ENCODE measurements at regions of chr1 and their contacts with region 1.

Region 1: GRCh38 chr1:87084244-87084836 is 169.9 kb downstream of the HS2ST1 start:
- DNase-seq: peak; percentile 4
- ATAC-seq: no peak
- H3K4me3 ChIP-seq: no peak overlapping the region
- H3K27ac ChIP-seq: no peak overlapping the region
- H3K4me1 ChIP-seq: no peaks in the 10 kb centered on the region
- H3K27me3 ChIP-seq: no peaks in the 10 kb centered on the region
- CTCF ChIP-seq: peak; percentile 32; the same call in 1 of the 2 replicates
- EP300 ChIP-seq: no peak
- POLR2A ChIP-seq: no peak
- RAD21 ChIP-seq: no peak

Region 2: GRCh38 chr1:86825319-86825718 is 259.0 kb before region 1 on chr1:
- CTCF ChIA-PET with region 1: no interaction called
- POLR2A ChIA-PET with region 1: no interaction called
- in situ Hi-C with region 1: loop called (anchors 10 kb)
- intact Hi-C with region 1: no loop called
- DNase-seq: no peak
- ATAC-seq: no peak
- H3K4me3 ChIP-seq: no peak overlapping the region
- H3K27ac ChIP-seq: no peak overlapping the region
- H3K4me1 ChIP-seq: peaks cover 55% of the 10 kb centered on the region
- H3K27me3 ChIP-seq: no peaks in the 10 kb centered on the region
- CTCF ChIP-seq: no peak
- EP300 ChIP-seq: no peak
- POLR2A ChIP-seq: no peak
- RAD21 ChIP-seq: no peak

Region 3: GRCh38 chr1:87045761-87046304 is 38.5 kb before region 1 on chr1:
- CTCF ChIA-PET with region 1: no interaction called
- POLR2A ChIA-PET with region 1: no interaction called
- in situ Hi-C with region 1: no loop called
- intact Hi-C with region 1: no loop called
- DNase-seq: no peak
- ATAC-seq: no peak
- H3K4me3 ChIP-seq: no peak overlapping the region
- H3K27ac ChIP-seq: no peak overlapping the region
- H3K4me1 ChIP-seq: no peaks in the 10 kb centered on the region
- H3K27me3 ChIP-seq: no peaks in the 10 kb centered on the region
- CTCF ChIP-seq: no peak
- EP300 ChIP-seq: no peak
- POLR2A ChIP-seq: no peak
- RAD21 ChIP-seq: no peak

Region 4: DNA sequence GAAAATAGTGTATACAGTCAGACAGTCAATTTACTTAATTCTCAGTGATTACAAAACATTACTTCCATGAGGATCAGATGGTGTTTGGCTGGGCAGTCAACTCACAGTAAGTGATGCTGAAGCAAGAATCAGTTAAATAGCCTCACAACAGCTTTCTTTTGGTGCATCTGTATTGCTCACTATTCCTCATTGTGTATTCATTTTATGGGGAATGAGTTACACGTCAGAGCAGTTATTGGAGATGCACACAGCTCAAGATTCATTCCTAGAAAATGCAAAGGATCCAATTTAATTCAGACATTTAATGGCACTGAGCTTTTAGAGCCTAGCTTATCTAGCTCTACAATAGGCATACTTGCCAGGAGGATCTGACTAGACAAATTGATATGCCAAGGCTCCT is 19.4 kb before region 1 on chr1:
- CTCF ChIA-PET with region 1: no interaction called
- POLR2A ChIA-PET with region 1: no interaction called
- in situ Hi-C with region 1: no loop called
- intact Hi-C with region 1: no loop called
- DNase-seq: no peak
- ATAC-seq: no peak
- H3K4me3 ChIP-seq: no peak overlapping the region
- H3K27ac ChIP-seq: no peak overlapping the region
- H3K4me1 ChIP-seq: no peaks in the 10 kb centered on the region
- H3K27me3 ChIP-seq: no peaks in the 10 kb centered on the region
- CTCF ChIP-seq: no peak
- EP300 ChIP-seq: no peak
- POLR2A ChIP-seq: no peak
- RAD21 ChIP-seq: no peak

Measured in HepG2 (cell line).